ENCODE measurements at regions of chr5 and their contacts with region 1.

Region 1: GRCh38 chr5:159163027-159163700 is 46.2 kb downstream of the RNF145 start:
- DNase-seq: no peak
- ATAC-seq: no peak
- H3K4me3 ChIP-seq: no peak overlapping the region
- H3K27ac ChIP-seq: no peak overlapping the region
- H3K4me1 ChIP-seq: no peaks in the 10 kb centered on the region
- H3K27me3 ChIP-seq: no peaks in the 10 kb centered on the region
- CTCF ChIP-seq: no peak
- EP300 ChIP-seq: no peak
- POLR2A ChIP-seq: no peak
- RAD21 ChIP-seq: no peak

Region 2: GRCh38 chr5:159316519-159317383 is 153.6 kb after region 1 on chr5:
- CTCF ChIA-PET with region 1: interaction called, 216 read pairs
- POLR2A ChIA-PET with region 1: interaction called, 3 read pairs
- RAD21 ChIA-PET with region 1: interaction called, 112 read pairs
- SMC1A ChIA-PET with region 1: interaction called, 131 read pairs
- in situ Hi-C with region 1: loop called (anchors 5 kb)
- intact Hi-C with region 1: no loop called
- DNase-seq: no peak
- ATAC-seq: peak; percentile 98
- H3K4me3 ChIP-seq: no peak overlapping the region
- H3K27ac ChIP-seq: no peak overlapping the region
- H3K4me1 ChIP-seq: no peaks in the 10 kb centered on the region
- H3K27me3 ChIP-seq: no peaks in the 10 kb centered on the region
- CTCF ChIP-seq: peak; percentile 73 to 77 (median 76)
- EP300 ChIP-seq: no peak
- POLR2A ChIP-seq: no peak
- RAD21 ChIP-seq: peak; percentile 75